ENCODE measurements at regions of chr2 and their contacts with region 1.

Region 1: DNA sequence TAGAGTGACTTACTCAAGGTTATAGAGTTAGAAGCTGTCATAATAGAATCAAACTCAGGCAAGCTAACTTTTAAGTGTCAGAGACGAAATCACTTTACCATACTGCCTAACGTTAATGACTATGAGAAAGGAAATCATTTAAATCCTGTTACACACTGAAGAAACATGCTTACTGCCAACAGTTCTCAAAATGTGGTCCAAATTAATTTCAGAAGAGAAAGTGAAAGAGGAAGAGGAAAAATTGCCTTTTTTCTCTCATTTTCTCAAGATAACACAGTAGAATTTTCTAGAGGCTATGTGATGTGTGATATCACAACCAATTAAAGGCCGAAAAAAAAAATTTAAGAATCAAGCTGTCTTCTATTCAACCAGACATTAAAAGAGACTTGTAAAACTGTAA is 1362.7 kb upstream of the CHAC2 start:
- DNase-seq: no peak
- ATAC-seq: no peak
- H3K4me3 ChIP-seq: no peak overlapping the region
- H3K27ac ChIP-seq: no peak overlapping the region
- H3K4me1 ChIP-seq: no peaks in the 10 kb centered on the region
- H3K27me3 ChIP-seq: no peaks in the 10 kb centered on the region

Region 2: DNA sequence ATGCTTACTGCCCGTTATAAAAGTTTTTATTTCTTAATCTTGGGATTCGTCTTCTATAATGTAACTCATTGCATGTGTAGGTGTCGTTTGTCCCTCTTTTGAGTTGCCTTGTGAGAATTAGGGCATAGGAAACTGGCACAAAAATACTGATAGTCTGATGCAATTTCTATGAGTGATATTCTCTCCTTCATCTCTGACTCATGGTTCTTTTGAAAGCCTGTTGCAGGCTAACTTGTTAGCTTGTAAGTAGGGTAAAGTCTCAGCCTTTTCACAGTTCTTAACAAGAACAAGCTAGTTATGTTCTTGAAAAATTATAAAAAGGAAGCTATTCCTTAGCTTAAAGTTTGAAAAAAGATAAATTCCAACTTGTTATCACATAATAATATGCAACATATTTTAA is 287.6 kb before region 1 on chr2:
- intact Hi-C with region 1: loop called in 1 of 4 experiments (anchors 5 kb)
- DNase-seq: no peak
- ATAC-seq: no peak
- H3K4me3 ChIP-seq: no peak overlapping the region
- H3K27ac ChIP-seq: no peak overlapping the region
- H3K4me1 ChIP-seq: no peaks in the 10 kb centered on the region
- H3K27me3 ChIP-seq: no peaks in the 10 kb centered on the region